Activated T-helper 2 cell treated with anti-CD3 and anti-CD28 coated beads, Interferon-gamma antibody, Interleukin-2, Interleukin-4, amounts not matched to agents 10 μg/mL and 5 μg/mL and 100 μg/mL, durations not matched to agents 14 hours and 24 hours and 36 hours (primary cell): ENCODE measurements at regions of chr20 and their contacts with region 1.

Region 1: DNA sequence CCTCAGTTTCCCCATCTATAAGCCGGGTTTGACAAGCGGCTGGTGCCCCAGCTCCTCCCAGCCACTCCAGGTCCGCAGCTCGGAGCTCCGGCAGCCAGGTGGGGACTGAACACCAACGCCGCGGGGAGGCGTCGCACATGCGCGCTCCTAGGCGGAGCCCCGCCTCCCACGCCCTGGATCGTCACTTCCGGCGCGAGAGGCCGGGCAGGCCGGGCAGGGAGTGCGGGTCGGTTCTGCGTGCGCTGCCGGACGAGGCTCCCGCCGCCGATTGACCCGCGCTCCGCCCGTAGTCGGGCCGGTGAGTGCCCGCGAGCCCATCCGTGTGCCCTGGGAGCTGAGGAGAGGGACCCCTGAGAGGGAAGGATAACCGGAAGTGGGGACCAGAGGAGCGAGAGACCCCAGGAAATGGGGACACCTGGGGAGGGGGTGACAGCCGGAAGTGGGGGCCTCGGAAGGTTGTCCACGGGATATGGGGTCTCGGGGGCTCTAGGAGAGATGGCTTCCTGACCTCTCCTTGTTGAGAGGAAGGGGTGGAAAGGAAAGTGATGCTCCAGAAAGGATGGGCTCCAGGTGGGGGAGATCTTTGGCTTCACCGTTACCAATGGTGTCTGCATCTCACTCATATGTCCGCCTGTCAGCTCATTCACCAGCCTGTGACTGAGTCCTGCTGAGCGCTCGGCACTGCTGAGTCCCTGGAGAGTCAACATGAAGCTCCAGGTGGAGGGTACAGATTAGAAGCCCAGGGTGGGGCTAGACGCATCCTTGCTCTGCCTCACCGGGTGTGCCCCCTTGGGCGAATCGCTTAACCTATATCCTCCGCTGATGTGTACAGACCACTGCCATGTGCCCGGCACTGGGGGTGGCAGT is at the start of gene TTPAL:
- DNase-seq: peak; percentile 86
- H3K4me3 Mint-ChIP-seq: peak within 1 kb of the TSS; percentile 95
- H3K27ac Mint-ChIP-seq: peak within 1 kb of the TSS; percentile 94
- H3K4me1 Mint-ChIP-seq: peaks cover 17% of the 10 kb centered on the region
- H3K27me3 Mint-ChIP-seq: no peaks in the 10 kb centered on the region
- total RNA-seq, gene TTPAL: 19.7 and 20.8 TPM in 2 replicates

Region 2: GRCh38 chr20:44422083-44422482 is 53.8 kb before region 1 on chr20:
- intact Hi-C with region 1: no loop called
- DNase-seq: no peak
- H3K4me3 Mint-ChIP-seq: no peak overlapping the region
- H3K27ac Mint-ChIP-seq: no peak overlapping the region
- H3K4me1 Mint-ChIP-seq: peaks cover 3% of the 10 kb centered on the region
- H3K27me3 Mint-ChIP-seq: no peaks in the 10 kb centered on the region

Region 3: GRCh38 chr20:44495802-44496481 is 20.0 kb after region 1 on chr20:
- intact Hi-C with region 1: loop called (anchors 2 kb)
- DNase-seq: no peak
- H3K4me3 Mint-ChIP-seq: no peak overlapping the region
- H3K27ac Mint-ChIP-seq: peak overlapping the region; percentile 50
- H3K4me1 Mint-ChIP-seq: peaks cover 27% of the 10 kb centered on the region
- H3K27me3 Mint-ChIP-seq: no peaks in the 10 kb centered on the region

Region 4: GRCh38 chr20:44521484-44522481 is 45.9 kb after region 1 on chr20 and contains the start of gene SERINC3:
- intact Hi-C with region 1: loop called (anchors 2 kb)
- DNase-seq: peak; percentile 96
- H3K4me3 Mint-ChIP-seq: peak within 1 kb of the TSS; percentile 81
- H3K27ac Mint-ChIP-seq: peak within 1 kb of the TSS; percentile 79
- H3K4me1 Mint-ChIP-seq: peaks cover 38% of the 10 kb centered on the region
- H3K27me3 Mint-ChIP-seq: no peaks in the 10 kb centered on the region
- total RNA-seq, gene SERINC3: 51.2 and 52.5 TPM in 2 replicates